ENCODE measurements at regions of chr4 and their contacts with region 1.

Region 1: GRCh38 chr4:112604589-112604988 is 32.1 kb downstream of the ZGRF1 start:
- DNase-seq: peak; percentile 12
- H3K4me3 ChIP-seq: no peak overlapping the region
- CTCF ChIP-seq: peak; percentile 51

Region 2: GRCh38 chr4:112321776-112322684 is 282.6 kb before region 1 on chr4:
- CTCF ChIA-PET with region 1: interaction called, 244 read pairs
- POLR2A ChIA-PET with region 1: no interaction called
- DNase-seq: no peak
- H3K4me3 ChIP-seq: no peak overlapping the region
- CTCF ChIP-seq: peak; percentile 73

Region 3: DNA sequence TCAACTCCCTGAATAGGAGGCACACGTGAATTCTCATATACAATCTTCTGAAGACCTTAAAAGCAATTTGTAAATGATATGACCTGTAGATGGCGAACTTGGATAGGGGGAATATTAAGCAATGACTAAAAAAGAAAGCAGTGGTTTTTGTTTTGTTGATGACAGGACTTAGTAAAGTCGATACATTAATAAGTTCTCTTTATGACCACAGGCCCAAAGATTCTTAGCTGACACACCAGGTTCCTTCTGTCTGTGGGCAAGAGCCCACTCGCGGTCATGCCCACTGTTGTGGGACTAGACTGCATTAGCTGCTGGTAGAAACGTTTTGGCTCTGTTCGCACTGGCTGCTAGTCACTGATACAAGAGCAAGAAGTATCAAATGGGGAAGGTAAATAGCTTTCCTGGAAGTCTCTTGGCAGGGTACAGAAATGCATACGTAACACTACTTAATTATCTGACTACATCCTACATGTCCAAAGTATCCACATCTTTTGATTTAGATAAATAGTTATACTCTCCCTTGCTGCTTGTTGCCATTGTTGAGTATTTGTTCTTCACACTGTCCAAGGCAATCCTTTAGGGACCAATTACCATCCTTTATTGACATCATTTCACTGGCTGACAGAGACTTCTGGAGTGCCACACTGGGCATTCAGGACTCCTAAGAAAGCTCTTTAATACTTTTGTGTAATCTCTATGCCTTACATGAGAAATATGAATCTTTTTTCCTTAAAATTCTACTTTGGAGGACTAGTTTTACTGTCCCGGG is 276.4 kb before region 1 on chr4:
- CTCF ChIA-PET with region 1: interaction called, 244 read pairs
- POLR2A ChIA-PET with region 1: no interaction called
- DNase-seq: peak; percentile 31
- H3K4me3 ChIP-seq: no peak overlapping the region
- CTCF ChIP-seq: peak; percentile 22

Region 4: GRCh38 chr4:112523764-112524505 is 80.7 kb before region 1 on chr4:
- CTCF ChIA-PET with region 1: interaction called, 18 read pairs
- POLR2A ChIA-PET with region 1: no interaction called
- DNase-seq: no peak
- H3K4me3 ChIP-seq: peak overlapping the region; percentile 52
- CTCF ChIP-seq: peak; percentile 81

Region 5: GRCh38 chr4:112616984-112617383 is 12.4 kb after region 1 on chr4:
- CTCF ChIA-PET with region 1: interaction called, 20 read pairs
- POLR2A ChIA-PET with region 1: no interaction called
- DNase-seq: no peak
- H3K4me3 ChIP-seq: no peak overlapping the region
- CTCF ChIP-seq: no peak

Region 6: GRCh38 chr4:112633477-112634235 is 29.1 kb after region 1 on chr4:
- CTCF ChIA-PET with region 1: no interaction called
- POLR2A ChIA-PET with region 1: no interaction called
- DNase-seq: no peak
- H3K4me3 ChIP-seq: no peak overlapping the region
- CTCF ChIP-seq: peak; percentile 28